Activated naive CD4-positive, alpha-beta T cell treated with anti-CD3 and anti-CD28 coated beads, Interleukin-2, amount 10 ng/mL, durations not matched to agents 7 days and 5 days (primary cell): ENCODE measurements at regions of chr19 and their contacts with region 1.

Region 1: DNA sequence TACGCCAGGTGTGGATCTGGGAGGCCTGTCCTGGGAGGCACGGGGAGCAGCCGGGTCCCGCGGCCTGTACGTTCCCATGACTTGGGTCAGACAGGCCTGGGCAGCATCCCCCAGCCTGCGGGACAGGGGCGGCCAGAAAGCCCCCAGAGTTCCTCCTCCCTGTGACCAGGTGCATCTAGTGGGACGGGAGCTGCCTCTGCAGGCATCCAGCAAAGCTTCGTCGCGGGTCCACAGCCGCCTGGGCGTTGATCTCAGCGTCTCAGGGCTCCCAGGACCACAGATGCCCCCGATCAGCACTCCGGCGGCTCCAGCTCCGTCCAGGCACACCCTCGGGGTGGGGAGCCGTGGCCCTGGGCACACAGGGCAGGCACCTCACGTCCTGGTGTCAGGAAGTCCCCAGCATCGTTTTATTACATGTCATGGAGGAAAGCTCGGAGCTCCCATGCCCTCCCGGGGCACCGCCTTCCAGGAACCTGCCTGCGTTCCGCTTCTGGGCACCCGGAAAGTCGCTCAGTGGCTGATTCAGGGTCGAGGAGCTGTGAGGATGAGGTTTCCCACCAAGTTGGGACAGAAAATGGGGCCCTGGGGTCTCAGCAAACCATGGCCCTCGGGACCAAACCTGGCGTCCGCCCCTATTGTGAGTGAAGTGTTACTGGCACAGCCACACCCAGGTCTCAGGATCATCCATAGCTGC is 1.5 kb upstream of the GZMM start:
- DNase-seq: no peak
- H3K4me3 Mint-ChIP-seq: no peak overlapping the region
- H3K27ac Mint-ChIP-seq: no peak overlapping the region
- H3K4me1 Mint-ChIP-seq: peaks cover 21% of the 10 kb centered on the region
- H3K27me3 Mint-ChIP-seq: peaks cover 10% of the 10 kb centered on the region

Region 2: DNA sequence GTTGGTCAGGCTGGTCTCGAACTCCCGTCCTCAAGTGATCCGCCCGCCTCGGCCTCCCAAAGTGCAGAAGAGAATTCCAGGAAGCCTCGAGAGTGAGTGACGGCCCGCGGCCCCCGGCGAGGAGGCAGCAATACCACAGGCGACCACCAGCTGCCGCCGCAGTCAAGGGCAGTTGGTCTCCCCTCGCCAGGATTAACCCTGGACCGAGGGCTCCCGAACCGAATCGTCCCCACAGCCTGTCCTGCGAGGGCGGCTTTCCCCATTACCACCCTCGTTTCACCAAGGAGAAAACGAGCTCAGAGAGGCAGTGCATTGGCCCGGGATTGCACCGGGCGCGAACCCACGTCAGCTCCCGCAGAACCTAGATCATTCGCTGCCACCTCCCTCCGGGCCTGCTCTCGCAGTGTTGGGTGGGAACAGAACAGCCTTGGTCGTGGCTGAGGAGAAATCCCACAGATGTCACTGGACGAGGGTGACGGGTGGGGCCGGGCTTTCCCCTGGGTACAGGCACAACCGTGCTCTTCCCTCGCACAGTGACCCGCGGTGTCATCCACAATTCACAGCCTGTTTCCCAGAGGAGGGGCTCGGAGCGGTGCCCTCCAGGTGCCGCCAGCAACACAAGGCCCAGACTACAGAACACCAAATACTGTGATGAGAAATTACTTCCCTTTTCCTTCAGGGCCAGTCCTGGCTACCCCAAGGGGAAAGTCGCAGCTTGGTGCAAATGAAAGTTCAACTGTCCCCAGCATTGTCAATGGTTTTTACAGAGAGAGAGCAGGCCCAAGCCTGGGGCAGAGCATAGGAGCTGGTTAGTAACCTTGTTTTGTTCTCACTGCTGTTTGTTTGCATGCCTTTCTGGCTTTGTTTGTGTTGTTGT is 158.2 kb before region 1 on chr19:
- CTCF ChIA-PET with region 1: no interaction called
- DNase-seq: no peak
- H3K4me3 Mint-ChIP-seq: no peak overlapping the region
- H3K27ac Mint-ChIP-seq: no peak overlapping the region
- H3K4me1 Mint-ChIP-seq: peaks cover 14% of the 10 kb centered on the region
- H3K27me3 Mint-ChIP-seq: peaks cover 70% of the 10 kb centered on the region

Region 3: DNA sequence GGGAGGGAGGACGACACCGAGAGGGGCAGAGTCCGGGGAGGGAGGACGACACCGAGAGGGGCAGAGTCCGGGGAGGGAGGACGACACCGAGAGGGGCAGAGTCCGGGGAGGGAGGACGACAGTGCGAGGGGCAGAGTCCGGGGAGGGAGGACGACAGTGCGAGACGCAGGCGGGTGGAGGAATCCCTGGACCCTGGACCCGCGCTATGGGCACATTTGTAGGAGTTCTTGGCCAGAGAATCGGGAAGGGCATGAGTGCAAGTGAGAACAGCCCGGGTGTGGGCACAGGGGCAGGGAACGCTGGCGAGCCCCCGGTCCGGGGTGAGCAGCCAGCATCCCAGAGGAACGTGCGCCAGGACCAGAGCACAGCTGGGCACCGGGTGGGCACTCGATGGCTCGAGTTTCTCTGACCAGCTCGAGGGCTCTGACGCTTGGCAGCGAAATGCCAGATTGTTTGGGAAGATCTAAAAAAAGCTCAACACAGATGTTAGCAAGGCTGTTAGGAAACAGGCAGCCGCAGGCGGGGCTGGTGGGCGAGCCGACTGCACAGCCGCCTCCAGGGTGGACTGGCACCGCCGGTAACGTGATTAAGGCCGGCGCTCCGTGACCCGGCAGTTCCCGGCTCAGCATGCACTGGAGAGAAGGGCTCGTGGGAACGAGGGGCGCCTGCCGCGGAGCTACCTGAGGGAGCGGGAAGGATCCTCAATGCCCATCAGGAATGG is 115.4 kb before region 1 on chr19:
- CTCF ChIA-PET with region 1: no interaction called
- DNase-seq: no peak
- H3K4me3 Mint-ChIP-seq: no peak overlapping the region
- H3K27ac Mint-ChIP-seq: no peak overlapping the region
- H3K4me1 Mint-ChIP-seq: no peaks in the 10 kb centered on the region
- H3K27me3 Mint-ChIP-seq: no peaks in the 10 kb centered on the region

Region 4: GRCh38 chr19:531009-531752 is 11.1 kb before region 1 on chr19:
- CTCF ChIA-PET with region 1: interaction called, 10 read pairs
- DNase-seq: peak; percentile 88
- H3K4me3 Mint-ChIP-seq: peak overlapping the region; percentile 79
- H3K27ac Mint-ChIP-seq: peak overlapping the region; percentile 88
- H3K4me1 Mint-ChIP-seq: peaks cover 23% of the 10 kb centered on the region
- H3K27me3 Mint-ChIP-seq: peaks cover 22% of the 10 kb centered on the region